ENCODE measurements at regions of chr9 and their contacts with region 1.

Region 1: DNA sequence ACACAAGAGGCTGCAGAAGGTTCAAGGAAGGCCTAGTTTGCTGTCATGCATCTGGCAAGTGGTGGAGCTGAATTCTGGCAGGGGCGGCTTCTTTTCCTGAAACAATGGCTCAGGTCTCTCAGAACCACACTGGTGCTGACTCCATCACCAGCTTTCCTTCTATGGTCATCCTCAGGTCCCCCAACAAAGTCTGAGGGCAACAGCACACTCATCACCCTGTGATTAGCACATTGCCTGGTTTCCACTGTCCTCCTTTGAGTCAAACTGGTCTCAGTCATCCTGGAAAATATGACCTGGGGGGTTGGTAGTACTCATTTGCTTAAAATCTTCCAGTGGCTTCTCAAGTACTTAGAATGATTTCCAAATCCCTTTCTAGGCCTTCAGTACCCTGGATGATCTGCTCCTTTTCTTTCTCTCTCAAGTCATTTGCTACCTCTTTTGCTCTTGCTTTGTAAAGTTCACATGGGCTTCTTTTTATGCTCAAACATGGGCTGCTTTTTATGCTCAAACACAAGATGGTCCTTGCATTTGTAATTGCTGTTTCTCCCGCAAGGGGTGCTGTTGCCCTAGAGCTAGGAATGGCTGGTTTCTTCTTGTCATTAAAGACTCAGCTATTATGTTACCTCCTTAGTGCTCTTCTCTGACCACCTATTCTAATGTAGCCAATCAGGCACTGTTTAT is 144.9 kb downstream of the ALDH1A1 start:
- DNase-seq: no peak
- H3K4me3 Mint-ChIP-seq: no peak overlapping the region
- H3K27ac Mint-ChIP-seq: no peak overlapping the region
- H3K4me1 Mint-ChIP-seq: no peaks in the 10 kb centered on the region
- H3K27me3 Mint-ChIP-seq: peaks cover 4% of the 10 kb centered on the region

Region 2: DNA sequence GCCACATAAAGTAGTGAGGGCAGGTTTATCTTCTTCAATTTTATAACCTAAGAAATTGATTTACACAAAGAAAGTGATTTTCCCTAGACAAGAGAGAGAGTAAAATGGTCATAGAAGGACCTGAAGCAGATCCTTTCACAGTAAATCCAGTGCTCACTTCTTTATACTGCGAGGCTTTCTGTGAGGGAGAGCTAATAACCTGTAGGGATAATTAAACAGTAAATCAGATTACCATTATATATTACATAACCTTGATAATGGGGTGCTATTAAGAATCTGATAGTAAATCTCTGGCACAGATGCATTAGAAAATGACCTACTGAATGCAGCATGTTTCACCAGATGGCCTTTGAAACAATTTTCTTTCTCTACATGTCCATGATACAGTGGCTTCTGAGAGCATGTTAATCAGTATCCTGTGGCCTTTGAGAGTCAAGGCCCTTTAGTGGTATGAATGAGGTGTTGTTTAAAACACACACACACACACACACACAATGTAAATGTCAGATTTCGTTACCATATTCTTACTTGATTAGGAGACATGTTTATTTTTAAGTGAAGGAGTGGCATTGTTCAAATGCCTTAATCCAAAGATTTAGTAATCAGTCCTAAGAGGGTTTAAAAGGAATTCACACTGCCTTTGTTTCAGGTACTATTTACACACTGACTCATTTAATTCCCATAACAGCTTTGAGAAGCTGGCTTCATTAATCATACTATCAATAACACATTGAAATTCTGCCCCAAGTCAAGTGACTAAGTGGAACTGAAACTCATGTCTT is 20.2 kb after region 1 on chr9:
- intact Hi-C with region 1: loop called (anchors 2 kb)
- DNase-seq: no peak
- H3K4me3 Mint-ChIP-seq: no peak overlapping the region
- H3K27ac Mint-ChIP-seq: no peak overlapping the region
- H3K4me1 Mint-ChIP-seq: no peaks in the 10 kb centered on the region
- H3K27me3 Mint-ChIP-seq: peaks cover 3% of the 10 kb centered on the region